Vagina (tissue), 2 donors: ENCODE measurements at regions of chr7 and their contacts with region 1.

Region 1: DNA sequence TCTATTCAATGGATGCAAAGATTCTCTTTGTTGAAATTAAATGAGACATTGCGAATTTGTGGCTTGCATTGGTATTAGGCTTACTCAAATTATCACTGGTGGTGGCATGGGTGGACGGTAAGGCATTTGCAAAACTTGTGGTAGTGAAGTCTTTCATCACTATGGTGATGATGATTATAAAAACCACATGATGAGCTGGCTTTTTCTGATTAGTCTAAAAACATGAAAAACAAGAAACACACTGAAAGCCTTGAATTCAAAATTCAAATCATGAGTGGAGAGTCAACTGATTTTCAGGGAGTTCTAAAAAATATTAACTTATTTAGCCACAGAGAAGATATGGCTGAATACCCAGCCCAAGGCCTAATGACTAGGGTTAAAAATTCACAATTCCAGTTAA is 99.8 kb upstream of the HGF start:
- DNase-seq: no peak
- H3K4me3 ChIP-seq: no peak overlapping the region
- H3K27ac ChIP-seq: no peak overlapping the region
- H3K4me1 ChIP-seq: no peaks in the 10 kb centered on the region
- H3K27me3 ChIP-seq: no peaks in the 10 kb centered on the region
- CTCF ChIP-seq: no peak
- POLR2A ChIP-seq: no peak

Region 2: GRCh38 chr7:81776948-81777630 is 92.6 kb before region 1 on chr7:
- intact Hi-C with region 1: no loop called
- DNase-seq: no peak
- H3K4me3 ChIP-seq: no peak overlapping the region
- H3K27ac ChIP-seq: no peak overlapping the region
- H3K4me1 ChIP-seq: no peaks in the 10 kb centered on the region
- H3K27me3 ChIP-seq: no peaks in the 10 kb centered on the region
- CTCF ChIP-seq: no peak
- POLR2A ChIP-seq: no peak

Region 3: GRCh38 chr7:81937091-81937490 is 67.4 kb after region 1 on chr7:
- intact Hi-C with region 1: loop called (anchors 1 kb)
- DNase-seq: no peak
- H3K4me3 ChIP-seq: no peak overlapping the region
- H3K27ac ChIP-seq: no peak overlapping the region
- H3K4me1 ChIP-seq: no peaks in the 10 kb centered on the region
- H3K27me3 ChIP-seq: no peaks in the 10 kb centered on the region
- CTCF ChIP-seq: no peak
- POLR2A ChIP-seq: no peak